Right cardiac atrium (tissue), 5 donors: ENCODE measurements at regions of chr12 and their contacts with region 1.

Region 1: DNA sequence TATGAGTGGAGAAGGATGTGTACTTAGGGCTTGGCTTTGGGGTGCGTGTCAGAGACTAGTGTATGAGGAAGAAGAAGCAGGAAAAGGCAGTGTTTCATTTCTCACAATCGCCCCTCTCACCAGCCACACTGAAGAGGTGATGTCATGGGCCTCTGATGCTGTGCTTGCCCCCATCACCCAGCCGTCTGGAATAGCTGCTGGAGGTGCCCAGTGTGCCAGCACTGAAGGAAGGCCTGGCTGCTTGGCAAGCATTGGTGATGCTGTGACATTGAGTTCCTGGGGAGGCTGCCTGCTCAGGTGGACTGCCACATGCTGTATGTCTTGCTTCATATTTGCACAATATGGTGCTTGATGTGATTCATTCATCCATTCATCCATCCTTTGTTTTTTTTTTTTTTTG is 56.2 kb downstream of the CRADD start:
- DNase-seq: no peak
- ATAC-seq: peak; percentile 25 to 29
- H3K4me3 ChIP-seq: no peak overlapping the region
- H3K27ac ChIP-seq: no peak overlapping the region
- H3K4me1 ChIP-seq: peaks cover 3% of the 10 kb centered on the region
- H3K27me3 ChIP-seq: no peaks in the 10 kb centered on the region

Region 2: DNA sequence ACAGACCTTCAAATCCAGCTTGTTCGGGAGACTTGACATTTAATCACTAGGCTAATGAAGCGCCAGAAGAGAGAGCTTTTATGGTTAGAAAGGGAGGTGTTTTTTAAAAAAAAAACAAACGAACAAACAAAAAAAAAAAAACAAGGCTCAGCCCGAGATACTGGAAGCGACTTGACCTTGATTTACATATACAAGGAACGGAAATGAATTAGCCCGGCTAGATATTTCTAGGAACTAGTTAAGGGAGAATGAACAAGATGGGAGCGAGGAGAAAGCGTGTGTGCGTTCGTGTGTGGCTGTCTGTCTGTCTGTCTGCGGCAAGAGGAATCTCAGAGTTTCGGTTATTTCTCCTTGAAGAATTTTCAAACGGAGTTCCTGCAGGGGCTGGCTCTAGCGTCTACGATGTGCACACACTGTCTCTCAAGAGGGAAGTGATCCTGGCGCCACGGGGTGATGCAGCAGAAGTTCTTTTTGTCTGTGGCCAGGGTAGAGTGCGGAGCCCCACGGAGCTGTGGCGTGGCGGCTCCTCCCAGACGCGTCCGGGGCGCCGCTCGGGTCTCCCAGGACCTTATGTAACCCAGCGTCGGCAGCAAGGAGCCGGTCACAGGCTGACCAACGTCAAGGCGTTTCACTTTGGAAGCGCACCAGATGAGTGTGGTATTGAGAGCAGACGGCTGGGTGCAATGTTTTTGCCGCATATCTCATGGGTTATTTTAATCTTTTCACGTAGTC is 142.1 kb before region 1 on chr12:
- intact Hi-C with region 1: loop called in 1 of 4 experiments (anchors 5 kb)
- DNase-seq: peak; percentile 88 to 95 (median 93)
- ATAC-seq: peak; percentile 98
- H3K4me3 ChIP-seq: peak overlapping the region; percentile 32
- H3K27ac ChIP-seq: peak overlapping the region; percentile 64
- H3K4me1 ChIP-seq: peaks cover 1% of the 10 kb centered on the region
- H3K27me3 ChIP-seq: no peaks in the 10 kb centered on the region

Region 3: GRCh38 chr12:93663006-93663728 is 70.2 kb before region 1 on chr12:
- intact Hi-C with region 1: no loop called
- DNase-seq: peak; percentile 63 to 79 (median 67)
- ATAC-seq: peak; percentile 57 to 83
- H3K4me3 ChIP-seq: no peak overlapping the region
- H3K27ac ChIP-seq: no peak overlapping the region
- H3K4me1 ChIP-seq: no peaks in the 10 kb centered on the region
- H3K27me3 ChIP-seq: no peaks in the 10 kb centered on the region

Region 4: DNA sequence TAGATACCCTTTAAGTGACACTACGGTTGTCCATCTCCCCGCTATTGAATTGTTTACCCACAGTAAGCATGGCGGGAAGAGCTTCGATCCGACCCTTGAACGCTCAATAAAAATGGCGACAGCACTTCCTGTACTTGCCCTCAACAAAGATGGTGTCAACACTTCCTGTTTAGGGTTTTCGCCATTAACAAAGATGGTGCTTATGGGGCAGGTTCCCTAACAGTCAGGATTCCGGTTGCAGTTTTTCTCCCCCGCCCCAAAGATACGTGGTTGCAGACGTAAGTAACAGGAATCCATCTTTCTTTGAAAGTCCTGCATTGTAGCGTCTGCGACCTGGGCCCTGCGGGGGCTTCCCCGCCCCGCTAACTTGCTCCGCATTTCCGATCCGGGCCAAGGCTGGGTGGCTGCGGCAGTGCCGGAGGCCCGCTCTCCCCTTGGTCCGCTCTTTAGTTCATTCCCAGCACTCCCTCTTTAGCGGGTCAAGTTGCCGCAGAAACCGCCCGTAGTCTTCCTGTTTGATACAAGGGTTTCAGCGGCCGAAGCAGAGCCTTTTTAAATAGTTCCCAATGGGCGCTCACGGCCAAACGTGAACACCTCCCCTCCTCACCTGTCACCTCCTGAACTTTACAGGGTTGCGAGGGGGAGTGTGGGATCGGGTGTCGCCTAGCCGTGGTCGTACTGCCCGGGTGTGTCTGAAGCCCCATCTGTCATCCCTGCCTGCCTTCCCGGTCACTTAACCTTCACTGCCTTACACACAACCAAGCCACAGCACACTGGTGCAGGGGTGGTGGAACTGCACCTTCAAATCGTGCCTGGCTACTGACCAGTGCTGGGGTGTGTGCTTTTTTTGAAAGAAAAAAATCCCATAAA is 55.9 kb before region 1 on chr12 and contains the start of gene CRADD:
- intact Hi-C with region 1: loop called in 2 of 4 experiments (anchors 5 to 10 kb)
- DNase-seq: peak; percentile 77 to 89 (median 87)
- ATAC-seq: peak; percentile 96 to 97
- H3K4me3 ChIP-seq: peak within 1 kb of the TSS; percentile 69
- H3K27ac ChIP-seq: peak within 1 kb of the TSS; percentile 100
- H3K4me1 ChIP-seq: peaks cover 7% of the 10 kb centered on the region
- H3K27me3 ChIP-seq: no peaks in the 10 kb centered on the region
- total RNA-seq, gene CRADD: 29.1 to 45.7 (median 38.3) TPM

Region 5: DNA sequence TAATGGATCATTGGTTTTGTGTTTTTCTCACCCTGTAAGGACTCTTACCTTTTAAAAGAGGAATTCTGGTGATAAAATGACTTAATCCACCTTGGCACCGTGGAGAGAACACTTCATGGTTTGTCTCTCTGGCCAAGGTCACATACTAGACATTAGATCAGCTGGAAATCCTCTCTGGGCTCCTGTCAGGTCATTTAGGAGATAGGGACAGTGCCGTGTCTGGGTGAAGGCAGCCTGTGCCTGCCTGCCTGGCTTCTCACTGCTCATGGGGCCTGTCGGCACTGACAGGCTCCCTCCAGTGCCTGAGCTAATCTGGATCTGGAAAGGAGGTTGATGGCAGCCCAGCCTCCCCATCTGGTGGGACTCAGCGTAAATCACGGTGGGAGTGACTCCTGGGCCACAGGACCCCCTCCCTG is 50.5 kb before region 1 on chr12:
- intact Hi-C with region 1: loop called in 3 of 4 experiments (anchors 5 to 10 kb)
- DNase-seq: peak; percentile 39 to 83 (median 73)
- ATAC-seq: peak; percentile 83 to 86
- H3K4me3 ChIP-seq: no peak overlapping the region
- H3K27ac ChIP-seq: peak overlapping the region; percentile 76
- H3K4me1 ChIP-seq: peaks cover 20% of the 10 kb centered on the region
- H3K27me3 ChIP-seq: no peaks in the 10 kb centered on the region

Region 6: GRCh38 chr12:93689076-93689834 is 44.1 kb before region 1 on chr12:
- intact Hi-C with region 1: loop called in 2 of 4 experiments (anchors 5 to 10 kb)
- DNase-seq: no peak
- ATAC-seq: no peak
- H3K4me3 ChIP-seq: no peak overlapping the region
- H3K27ac ChIP-seq: no peak overlapping the region
- H3K4me1 ChIP-seq: peaks cover 11% of the 10 kb centered on the region
- H3K27me3 ChIP-seq: no peaks in the 10 kb centered on the region